Activated naive CD4-positive, alpha-beta T cell treated with anti-CD3 and anti-CD28 coated beads for 36 hours (primary cell): ENCODE measurements at regions of chr3 and their contacts with region 1.

Region 1: DNA sequence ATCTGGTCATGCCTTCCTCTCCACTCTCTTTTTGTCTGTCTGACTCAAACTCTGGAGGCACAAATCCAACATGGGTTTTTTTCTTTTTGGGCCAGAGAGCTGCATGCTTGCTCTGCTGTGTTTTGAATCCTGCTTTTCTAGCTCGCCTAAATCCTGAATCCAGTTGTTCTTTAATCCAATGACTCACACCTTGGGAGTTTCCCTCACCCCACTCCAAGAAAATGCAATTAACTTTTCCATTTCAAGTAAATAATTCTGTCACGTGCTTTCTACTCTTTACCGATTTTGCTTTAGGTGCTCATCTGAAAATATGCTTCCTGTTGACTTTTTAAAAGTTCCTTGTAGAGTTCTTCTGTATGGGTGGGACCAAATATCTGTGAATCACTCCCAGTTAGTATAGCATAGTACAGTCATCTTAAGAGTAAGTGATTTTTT is 47.6 kb downstream of the SLMAP start:
- DNase-seq: no peak
- H3K4me3 Mint-ChIP-seq: peak overlapping the region; percentile 3
- H3K27ac Mint-ChIP-seq: peak overlapping the region; percentile 33
- H3K4me1 Mint-ChIP-seq: peaks cover 70% of the 10 kb centered on the region
- H3K27me3 Mint-ChIP-seq: no peaks in the 10 kb centered on the region

Region 2: GRCh38 chr3:57729334-57730045 is 74.2 kb before region 1 on chr3:
- CTCF ChIA-PET with region 1: no interaction called
- intact Hi-C with region 1: no loop called
- DNase-seq: no peak
- H3K4me3 Mint-ChIP-seq: no peak overlapping the region
- H3K27ac Mint-ChIP-seq: no peak overlapping the region
- H3K4me1 Mint-ChIP-seq: no peaks in the 10 kb centered on the region
- H3K27me3 Mint-ChIP-seq: no peaks in the 10 kb centered on the region

Region 3: GRCh38 chr3:57770009-57770827 is 33.4 kb before region 1 on chr3:
- CTCF ChIA-PET with region 1: no interaction called
- intact Hi-C with region 1: no loop called
- DNase-seq: no peak
- H3K4me3 Mint-ChIP-seq: no peak overlapping the region
- H3K27ac Mint-ChIP-seq: no peak overlapping the region
- H3K4me1 Mint-ChIP-seq: peaks cover 36% of the 10 kb centered on the region
- H3K27me3 Mint-ChIP-seq: no peaks in the 10 kb centered on the region

Region 4: GRCh38 chr3:57787867-57788623 is 15.6 kb before region 1 on chr3:
- CTCF ChIA-PET with region 1: interaction called, 4 read pairs
- intact Hi-C with region 1: loop called (anchors 1 kb)
- DNase-seq: no peak
- H3K4me3 Mint-ChIP-seq: no peak overlapping the region
- H3K27ac Mint-ChIP-seq: no peak overlapping the region
- H3K4me1 Mint-ChIP-seq: peaks cover 31% of the 10 kb centered on the region
- H3K27me3 Mint-ChIP-seq: no peaks in the 10 kb centered on the region

Region 5: DNA sequence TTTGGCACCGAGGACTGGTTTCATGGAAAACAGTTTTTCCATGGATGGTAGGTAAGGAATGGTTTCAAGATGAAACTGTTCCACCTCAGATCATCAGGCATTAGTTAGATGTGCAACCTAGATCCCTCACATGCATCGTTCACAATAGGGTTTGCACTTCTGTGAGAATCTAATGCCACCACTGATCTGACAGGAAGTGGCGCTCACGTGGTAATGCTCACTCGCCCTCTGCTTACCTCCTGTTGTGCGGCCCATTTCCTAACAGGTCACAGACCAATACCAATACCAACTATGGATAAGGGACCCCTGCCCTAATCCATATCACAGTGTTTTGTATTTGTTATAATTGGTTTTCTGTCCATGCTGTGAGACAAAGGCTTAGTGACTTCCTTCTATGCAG is 11.4 kb after region 1 on chr3:
- CTCF ChIA-PET with region 1: no interaction called
- intact Hi-C with region 1: loop called (anchors 1 kb)
- DNase-seq: peak; percentile 64
- H3K4me3 Mint-ChIP-seq: no peak overlapping the region
- H3K27ac Mint-ChIP-seq: no peak overlapping the region
- H3K4me1 Mint-ChIP-seq: peaks cover 44% of the 10 kb centered on the region
- H3K27me3 Mint-ChIP-seq: no peaks in the 10 kb centered on the region